ENCODE measurements at regions of chr1 and their contacts with region 1.

Region 1: GRCh38 chr1:149962123-149962548 is 25.5 kb upstream of the MTMR11 start:
- DNase-seq: peak; percentile 85
- H3K4me3 Mint-ChIP-seq: no peak overlapping the region
- H3K27ac Mint-ChIP-seq: peak overlapping the region; percentile 33
- H3K4me1 Mint-ChIP-seq: peaks cover 22% of the 10 kb centered on the region
- H3K27me3 Mint-ChIP-seq: no peaks in the 10 kb centered on the region
- CTCF ChIP-seq: peak; percentile 88

Region 2: GRCh38 chr1:149917571-149918144 is 44.5 kb before region 1 on chr1 and contains the start of gene SV2A:
- CTCF ChIA-PET with region 1: no interaction called
- POLR2A ChIA-PET with region 1: no interaction called
- intact Hi-C with region 1: no loop called
- DNase-seq: no peak
- H3K4me3 Mint-ChIP-seq: no peak within 1 kb of the TSS
- H3K27ac Mint-ChIP-seq: no peak within 1 kb of the TSS
- H3K4me1 Mint-ChIP-seq: peaks cover 12% of the 10 kb centered on the region
- H3K27me3 Mint-ChIP-seq: peaks cover 10% of the 10 kb centered on the region
- CTCF ChIP-seq: no peak
- total RNA-seq, gene SV2A: 0.12 TPM in 1 of 2 replicates, not detected in the other

Region 3: GRCh38 chr1:149972547-149972946 is 10.4 kb after region 1 on chr1:
- CTCF ChIA-PET with region 1: interaction called, 10 read pairs
- POLR2A ChIA-PET with region 1: no interaction called
- intact Hi-C with region 1: no loop called
- DNase-seq: no peak
- H3K4me3 Mint-ChIP-seq: no peak overlapping the region
- H3K27ac Mint-ChIP-seq: peak overlapping the region; percentile 4
- H3K4me1 Mint-ChIP-seq: no peaks in the 10 kb centered on the region
- H3K27me3 Mint-ChIP-seq: no peaks in the 10 kb centered on the region
- CTCF ChIP-seq: no peak

Region 4: GRCh38 chr1:149997585-149998262 is 35.6 kb after region 1 on chr1:
- CTCF ChIA-PET with region 1: interaction called, 28 read pairs
- POLR2A ChIA-PET with region 1: interaction called, 5 read pairs
- intact Hi-C with region 1: no loop called
- DNase-seq: no peak
- H3K4me3 Mint-ChIP-seq: no peak overlapping the region
- H3K27ac Mint-ChIP-seq: no peak overlapping the region
- H3K4me1 Mint-ChIP-seq: peaks cover 43% of the 10 kb centered on the region
- H3K27me3 Mint-ChIP-seq: no peaks in the 10 kb centered on the region
- CTCF ChIP-seq: no peak

Region 5: GRCh38 chr1:150034336-150034735 is 72.2 kb after region 1 on chr1:
- CTCF ChIA-PET with region 1: interaction called, 21 read pairs
- POLR2A ChIA-PET with region 1: interaction called, 4 read pairs
- intact Hi-C with region 1: no loop called
- DNase-seq: no peak
- H3K4me3 Mint-ChIP-seq: no peak overlapping the region
- H3K27ac Mint-ChIP-seq: no peak overlapping the region
- H3K4me1 Mint-ChIP-seq: no peaks in the 10 kb centered on the region
- H3K27me3 Mint-ChIP-seq: no peaks in the 10 kb centered on the region
- CTCF ChIP-seq: no peak

Region 6: DNA sequence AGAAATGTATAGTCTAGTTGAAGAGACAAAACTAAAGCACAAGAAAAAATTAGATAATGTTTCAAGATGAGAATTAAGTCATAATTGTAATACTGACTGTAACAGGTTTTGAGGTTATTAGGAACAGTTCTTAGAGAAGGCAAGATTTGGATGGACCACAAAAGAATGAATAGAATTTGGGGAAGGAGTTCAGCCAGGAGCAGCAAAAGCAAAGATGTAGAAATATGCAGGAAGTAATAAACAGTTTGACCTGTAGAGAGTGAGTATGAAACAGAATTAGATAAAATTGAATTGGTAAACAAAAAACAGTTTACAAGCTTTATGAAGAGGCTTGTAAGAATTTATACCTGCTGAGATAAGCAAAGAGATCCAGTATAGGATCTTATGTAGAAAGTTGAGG is 121.8 kb after region 1 on chr1:
- CTCF ChIA-PET with region 1: no interaction called
- POLR2A ChIA-PET with region 1: no interaction called
- intact Hi-C with region 1: no loop called
- DNase-seq: no peak
- H3K4me3 Mint-ChIP-seq: no peak overlapping the region
- H3K27ac Mint-ChIP-seq: no peak overlapping the region
- H3K4me1 Mint-ChIP-seq: no peaks in the 10 kb centered on the region
- H3K27me3 Mint-ChIP-seq: no peaks in the 10 kb centered on the region
- CTCF ChIP-seq: no peak

Region 7: GRCh38 chr1:150168960-150169601 is 206.9 kb after region 1 on chr1:
- CTCF ChIA-PET with region 1: interaction called, 5 read pairs
- POLR2A ChIA-PET with region 1: no interaction called
- intact Hi-C with region 1: loop called (anchors 1 kb)
- DNase-seq: peak; percentile 82
- H3K4me3 Mint-ChIP-seq: no peak overlapping the region
- H3K27ac Mint-ChIP-seq: no peak overlapping the region
- H3K4me1 Mint-ChIP-seq: no peaks in the 10 kb centered on the region
- H3K27me3 Mint-ChIP-seq: no peaks in the 10 kb centered on the region
- CTCF ChIP-seq: peak; percentile 88

Region 8: DNA sequence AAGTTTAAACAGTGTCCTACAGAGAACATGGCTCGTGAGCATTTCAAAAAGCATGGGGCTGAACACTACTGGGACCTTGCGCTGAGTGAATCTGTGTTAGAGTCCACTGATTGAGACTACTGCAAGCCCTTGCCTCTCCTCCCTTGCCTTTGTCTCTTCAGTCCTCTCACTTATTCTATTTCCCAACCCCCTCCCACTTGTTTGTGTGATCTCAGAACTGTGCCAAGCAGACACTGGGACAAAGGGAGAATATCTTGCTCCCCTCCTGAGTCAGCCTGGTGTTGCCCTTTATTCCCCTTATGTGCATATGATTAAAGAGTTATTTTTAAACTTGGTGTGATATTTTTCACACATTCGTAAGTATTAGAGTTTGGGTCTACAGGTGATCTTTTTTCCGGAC is 390.7 kb after region 1 on chr1:
- CTCF ChIA-PET with region 1: no interaction called
- POLR2A ChIA-PET with region 1: no interaction called
- intact Hi-C with region 1: no loop called
- DNase-seq: no peak
- H3K4me3 Mint-ChIP-seq: no peak overlapping the region
- H3K27ac Mint-ChIP-seq: no peak overlapping the region
- H3K4me1 Mint-ChIP-seq: no peaks in the 10 kb centered on the region
- H3K27me3 Mint-ChIP-seq: no peaks in the 10 kb centered on the region
- CTCF ChIP-seq: no peak